AG04449 (cell line): ENCODE measurements at regions of chr9 and their contacts with region 1.

Region 1: DNA sequence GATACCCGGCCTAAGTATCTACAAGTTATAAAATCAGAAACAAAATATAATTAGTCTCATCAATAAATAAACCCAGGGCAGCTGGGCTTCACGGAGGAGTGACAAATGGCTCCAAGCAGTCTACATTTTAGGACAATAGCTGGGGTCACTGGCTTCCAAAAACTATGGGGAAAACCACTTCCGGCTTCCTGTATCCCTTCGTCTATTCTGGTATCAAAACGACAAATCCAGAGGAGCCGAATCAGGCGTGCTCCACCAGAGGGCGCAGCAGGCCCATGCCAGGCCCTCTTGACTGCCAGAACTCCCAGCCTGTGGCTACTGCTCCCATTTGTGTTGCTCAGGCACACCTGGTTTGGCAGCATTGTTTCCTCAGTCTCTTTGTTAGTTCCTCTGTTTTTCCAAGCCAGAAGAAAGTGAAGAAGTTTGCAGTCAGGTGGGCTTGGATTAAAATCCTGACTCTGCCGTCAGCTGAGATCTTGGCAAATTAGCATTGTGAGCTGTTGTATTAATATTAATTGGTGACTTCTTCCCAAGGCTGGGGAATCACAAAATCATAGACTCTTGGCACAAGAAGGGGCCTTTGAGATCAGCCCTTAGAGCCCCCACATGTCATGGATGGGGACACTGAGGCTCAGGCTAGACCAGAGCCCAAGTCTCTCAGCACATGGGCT is 11.6 kb upstream of the RAB14 start:
- DNase-seq: peak; percentile 45
- H3K4me3 ChIP-seq: no peak overlapping the region
- CTCF ChIP-seq: peak; percentile 93

Region 2: GRCh38 chr9:120755827-120756434 is 457.3 kb before region 1 on chr9:
- CTCF ChIA-PET with region 1: interaction called, 13 read pairs
- POLR2A ChIA-PET with region 1: no interaction called
- DNase-seq: no peak
- H3K4me3 ChIP-seq: no peak overlapping the region
- CTCF ChIP-seq: peak; percentile 68

Region 3: DNA sequence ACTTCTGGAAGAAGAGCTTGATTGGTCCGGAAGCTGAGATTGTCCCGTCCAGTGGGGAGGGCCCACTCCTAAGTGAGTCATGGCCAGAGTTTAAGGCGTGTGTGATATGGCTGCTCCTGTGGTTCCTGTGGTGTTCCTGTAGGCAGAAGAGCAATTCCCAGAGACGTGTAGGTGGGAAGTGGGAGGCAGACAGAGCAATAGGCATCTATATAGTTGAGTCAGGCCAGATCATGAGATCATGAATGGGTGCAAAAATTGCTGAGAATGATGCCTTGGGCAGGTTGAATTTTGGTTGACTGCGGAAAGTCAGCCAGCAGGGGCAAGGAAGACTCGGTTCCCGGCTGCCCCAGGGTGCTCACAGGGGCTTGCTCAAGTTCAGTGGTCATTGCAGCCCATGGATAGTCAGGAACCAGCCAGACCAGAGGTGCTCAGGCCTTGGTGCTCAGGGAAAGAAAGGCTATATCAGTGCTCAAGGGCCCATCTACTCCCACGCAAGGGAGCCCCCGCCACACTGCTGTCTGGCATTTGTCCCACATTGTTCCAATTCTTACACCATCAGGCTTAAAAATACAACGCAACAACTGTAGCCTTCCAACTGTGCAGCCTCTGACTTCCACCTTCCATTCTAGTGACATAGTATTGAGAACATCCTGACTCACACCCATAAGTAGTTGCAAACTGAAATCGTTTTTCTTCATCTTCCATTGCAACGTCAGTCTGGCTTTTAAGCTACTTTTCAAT is 33.7 kb after region 1 on chr9:
- CTCF ChIA-PET with region 1: interaction called, 31 read pairs
- POLR2A ChIA-PET with region 1: no interaction called
- DNase-seq: peak; percentile 77
- H3K4me3 ChIP-seq: no peak overlapping the region
- CTCF ChIP-seq: no peak

Region 4: DNA sequence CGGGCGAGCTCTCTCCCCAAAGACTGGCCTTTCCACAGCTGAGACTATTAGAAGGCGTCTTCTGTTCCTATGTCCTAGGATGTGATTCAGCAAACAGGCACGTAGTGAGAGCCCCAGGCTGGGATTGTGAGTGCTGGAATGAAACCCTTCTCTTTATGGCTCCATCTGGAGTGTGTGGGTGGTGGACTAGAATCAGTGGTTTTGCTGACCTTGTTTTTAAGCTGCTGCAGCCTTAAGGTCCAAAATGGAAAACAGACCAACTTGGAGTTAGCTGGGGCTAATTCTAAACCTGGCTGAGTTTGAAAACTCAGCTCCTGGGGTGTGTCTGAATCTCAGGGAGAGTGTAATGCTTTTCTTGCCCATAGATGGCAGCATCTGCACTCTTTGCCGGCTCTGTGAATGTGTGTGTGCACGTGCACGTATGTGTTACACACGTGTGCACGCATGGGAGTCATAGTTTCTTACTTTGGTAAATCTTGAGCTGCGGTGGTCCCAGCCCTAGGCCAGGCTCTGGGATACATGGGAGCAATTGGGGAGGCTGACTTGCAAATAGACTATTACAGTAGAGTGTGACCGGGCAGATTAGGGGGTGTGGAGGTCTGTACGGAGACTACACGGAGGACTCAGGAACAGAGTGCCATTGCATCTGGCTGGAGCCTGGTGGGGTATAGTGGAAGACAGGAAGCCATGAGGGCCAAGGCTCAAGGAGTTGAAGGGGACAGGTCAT is 65.4 kb after region 1 on chr9:
- CTCF ChIA-PET with region 1: interaction called, 109 read pairs
- POLR2A ChIA-PET with region 1: interaction called, 4 read pairs
- DNase-seq: peak; percentile 99
- H3K4me3 ChIP-seq: peak overlapping the region; percentile 38
- CTCF ChIP-seq: peak; percentile 61

Region 5: GRCh38 chr9:121313458-121314152 is 100.3 kb after region 1 on chr9:
- CTCF ChIA-PET with region 1: interaction called, 187 read pairs
- POLR2A ChIA-PET with region 1: no interaction called
- DNase-seq: no peak
- H3K4me3 ChIP-seq: no peak overlapping the region
- CTCF ChIP-seq: no peak

Region 6: GRCh38 chr9:121386442-121387185 is 173.3 kb after region 1 on chr9:
- CTCF ChIA-PET with region 1: interaction called, 13 read pairs
- POLR2A ChIA-PET with region 1: no interaction called
- DNase-seq: no peak
- H3K4me3 ChIP-seq: no peak overlapping the region
- CTCF ChIP-seq: no peak

Region 7: GRCh38 chr9:121405899-121406298 is 192.6 kb after region 1 on chr9:
- CTCF ChIA-PET with region 1: interaction called, 195 read pairs
- POLR2A ChIA-PET with region 1: no interaction called
- DNase-seq: no peak
- H3K4me3 ChIP-seq: no peak overlapping the region
- CTCF ChIP-seq: no peak